ENCODE measurements at regions of chr3 and their contacts with region 1.

Region 1: DNA sequence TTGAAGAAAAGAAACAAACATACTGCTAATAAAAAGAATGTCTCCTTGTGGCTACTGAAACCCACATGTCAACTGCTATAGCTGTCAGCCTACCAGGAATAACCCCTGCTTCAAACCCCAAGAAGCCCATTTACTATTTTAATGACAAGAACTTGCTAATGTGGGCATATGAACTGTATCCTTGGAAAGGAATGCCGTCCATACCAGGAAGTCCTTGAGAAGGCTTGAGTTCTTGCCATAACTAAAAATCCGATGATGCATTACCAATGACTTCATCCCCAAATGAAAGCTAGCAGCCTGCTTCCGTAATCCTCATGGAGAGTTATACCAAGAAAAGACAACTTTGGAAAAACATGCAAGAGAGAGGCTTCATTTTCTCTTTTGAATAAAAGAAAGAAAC is 34.8 kb downstream of the MINDY4B start:
- DNase-seq: no peak
- ATAC-seq: peak in 4 of 8 donors; percentile 48 to 85 (median 75)
- H3K4me3 ChIP-seq: no peak overlapping the region
- H3K27ac ChIP-seq: peak overlapping the region in 4 of 10 donors; percentile 32 to 54 (median 46)
- H3K4me1 ChIP-seq: peaks cover 0 to 15% (median 0%) of the 10 kb centered on the region in 9 donors
- H3K27me3 ChIP-seq: no peaks in the 10 kb centered on the region
- CTCF ChIP-seq: no peak

Region 2: GRCh38 chr3:149886957-149887356 is 983.4 kb before region 1 on chr3:
- intact Hi-C with region 1: no loop called
- DNase-seq: no peak
- ATAC-seq: no peak
- H3K4me3 ChIP-seq: no peak overlapping the region
- H3K27ac ChIP-seq: no peak overlapping the region
- H3K4me1 ChIP-seq: peaks cover 0 to 23% (median 11%) of the 10 kb centered on the region in 9 donors
- H3K27me3 ChIP-seq: no peaks in the 10 kb centered on the region
- CTCF ChIP-seq: no peak

Region 3: DNA sequence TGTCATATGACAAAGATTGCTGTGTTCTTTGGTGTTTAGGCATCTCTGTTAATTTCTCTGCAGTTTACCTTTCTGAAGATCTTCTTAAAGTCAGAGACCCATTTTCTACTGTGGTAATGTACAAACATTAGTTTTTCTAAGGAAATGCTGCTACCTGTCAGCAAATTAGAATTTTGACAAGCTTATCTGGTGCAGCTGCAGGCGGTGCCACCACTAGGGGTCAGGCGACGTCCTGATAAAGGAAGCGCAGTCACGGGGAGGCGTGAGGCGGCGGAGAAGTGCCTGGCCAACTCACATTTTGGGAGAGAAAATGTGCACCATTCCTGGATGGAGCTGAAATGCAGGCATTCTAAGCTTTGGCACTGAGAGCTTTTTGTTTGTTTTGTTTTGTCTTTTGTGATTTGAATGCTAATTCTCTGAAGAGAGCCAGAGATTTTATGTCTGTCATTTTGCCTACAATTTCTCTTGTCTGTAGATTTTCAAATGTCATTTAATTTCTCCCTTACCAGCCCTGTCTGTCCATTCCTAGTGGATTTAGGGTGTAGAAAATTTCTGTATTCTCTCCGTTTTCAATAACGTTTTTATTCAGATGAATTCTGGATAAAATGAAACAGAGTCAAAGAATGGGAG is 82.5 kb before region 1 on chr3:
- intact Hi-C with region 1: loop called in 3 of 10 experiments (anchors 5 to 10 kb)
- DNase-seq: peak; percentile 77 to 83
- ATAC-seq: peak in 7 of 8 donors; percentile 81 to 91 (median 84)
- H3K4me3 ChIP-seq: no peak overlapping the region
- H3K27ac ChIP-seq: no peak overlapping the region
- H3K4me1 ChIP-seq: peaks cover 0 to 7% (median 0%) of the 10 kb centered on the region in 9 donors
- H3K27me3 ChIP-seq: peaks cover 0 to 14% (median 0%) of the 10 kb centered on the region in 7 donors
- CTCF ChIP-seq: peak; percentile 84 to 96 (median 91)

Region 4: DNA sequence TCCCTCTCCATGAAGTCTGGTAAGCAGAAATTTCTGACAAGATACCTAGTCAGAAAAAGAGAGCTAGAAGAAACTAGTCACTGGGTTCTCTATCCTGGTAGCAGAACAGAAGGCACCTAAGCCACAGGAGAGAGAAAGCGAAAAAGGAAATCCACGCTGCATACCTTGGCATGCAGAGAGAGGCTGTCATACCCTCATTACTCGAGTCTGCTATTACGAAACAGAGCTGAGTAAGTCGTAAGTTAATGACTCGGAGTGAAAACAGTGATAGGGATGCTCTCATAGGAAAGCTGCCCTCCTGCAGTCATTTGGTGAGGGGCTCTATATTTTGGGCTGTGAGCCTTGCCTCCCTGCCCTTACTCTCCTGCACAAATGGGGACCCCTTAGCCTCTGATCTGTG is 86.0 kb after region 1 on chr3:
- intact Hi-C with region 1: no loop called
- DNase-seq: no peak
- ATAC-seq: no peak
- H3K4me3 ChIP-seq: no peak overlapping the region
- H3K27ac ChIP-seq: no peak overlapping the region
- H3K4me1 ChIP-seq: no peaks in the 10 kb centered on the region
- H3K27me3 ChIP-seq: peaks cover 0 to 9% (median 6%) of the 10 kb centered on the region in 7 donors
- CTCF ChIP-seq: no peak

Measured in heart right ventricle (tissue), 16 donors.